ENCODE measurements at regions of chr20 and their contacts with region 1.

Region 1: DNA sequence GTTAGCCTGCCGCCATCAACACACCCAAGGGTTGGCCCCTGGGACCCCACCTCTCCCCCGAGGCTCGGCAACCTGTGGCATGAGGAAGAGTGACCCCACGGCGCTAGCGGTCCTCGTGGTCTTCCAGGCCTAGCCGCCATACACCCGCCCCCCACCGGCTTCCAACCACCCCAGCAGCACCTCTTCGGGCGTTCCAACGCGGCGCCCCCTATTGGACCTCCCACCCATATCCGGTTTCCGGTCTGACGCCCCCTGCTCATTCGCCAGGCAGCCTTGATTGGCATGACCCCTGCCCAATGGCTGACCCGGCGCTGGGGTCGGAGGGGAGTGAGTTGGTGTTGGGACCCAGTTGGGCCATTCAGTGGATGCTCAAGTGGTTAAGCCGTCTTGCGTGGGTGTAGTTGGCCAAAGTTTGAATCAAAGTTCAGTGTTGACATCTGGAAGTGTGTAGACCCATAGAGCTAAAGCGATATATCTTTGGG is at the start of gene GNAS-AS1:
- DNase-seq: peak; percentile 76
- H3K4me3 ChIP-seq: peak within 1 kb of the TSS; percentile 74
- H3K27ac ChIP-seq: no peak within 1 kb of the TSS
- H3K27me3 ChIP-seq: peaks cover 24% of the 10 kb centered on the region
- CTCF ChIP-seq: no peak

Region 2: GRCh38 chr20:58515233-58516184 is 335.2 kb before region 1 on chr20 and contains the start of gene APCDD1L:
- in situ Hi-C with region 1: no loop called
- DNase-seq: no peak
- H3K4me3 ChIP-seq: peak within 1 kb of the TSS; percentile 66
- H3K27ac ChIP-seq: no peak within 1 kb of the TSS
- H3K27me3 ChIP-seq: peaks cover 39% of the 10 kb centered on the region
- CTCF ChIP-seq: no peak

Region 3: DNA sequence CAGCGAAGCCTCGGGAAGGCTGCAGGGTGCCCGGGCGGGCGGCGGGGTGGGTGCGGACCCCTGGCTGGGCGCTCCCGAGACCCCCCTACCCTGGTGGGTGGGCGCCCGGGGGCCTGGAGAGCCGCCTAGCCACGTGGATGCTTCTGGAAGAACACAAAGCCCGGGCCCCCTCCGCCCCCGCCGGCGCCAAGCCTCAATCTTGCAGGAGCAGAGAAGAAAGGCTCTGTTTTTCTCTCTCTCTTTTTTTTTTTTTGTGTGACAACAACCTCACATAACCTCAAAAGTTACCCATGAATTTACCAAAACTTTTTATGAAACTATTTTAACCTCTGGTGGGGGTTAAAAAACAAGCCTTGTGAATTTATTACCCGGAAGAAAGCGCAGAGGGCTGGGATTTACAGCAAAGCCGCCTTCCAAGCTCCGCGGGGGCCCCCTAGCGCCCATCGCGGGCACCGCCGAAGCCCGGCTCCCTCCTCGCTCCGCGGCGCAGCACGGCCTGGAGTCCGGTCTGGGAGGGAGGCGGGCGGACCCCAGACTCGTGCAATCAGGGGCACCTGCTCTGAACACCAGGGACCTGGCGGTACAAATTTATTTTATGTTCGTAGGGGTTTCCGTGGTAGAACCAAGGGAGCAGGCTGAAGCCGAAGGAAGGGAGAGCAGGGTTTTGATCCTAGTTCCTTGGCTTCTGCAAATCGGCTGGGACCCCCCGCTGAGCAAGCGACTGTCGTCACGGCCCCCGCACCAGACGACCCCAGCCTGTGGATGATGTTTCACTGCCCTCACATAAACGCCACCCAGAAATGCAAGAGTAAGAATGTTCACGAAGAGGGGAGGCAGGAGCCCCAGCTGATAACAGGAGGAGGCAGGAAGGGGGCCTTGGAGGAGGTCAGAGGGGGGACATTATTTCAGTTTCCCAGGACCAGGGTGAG is 371.8 kb after region 1 on chr20:
- in situ Hi-C with region 1: loop called (anchors 25 kb)
- DNase-seq: peak; percentile 57
- H3K4me3 ChIP-seq: peak overlapping the region; percentile 49
- H3K27ac ChIP-seq: no peak overlapping the region
- H3K27me3 ChIP-seq: peaks cover 14% of the 10 kb centered on the region
- CTCF ChIP-seq: peak; percentile 82

Measured in brain microvascular endothelial cell (primary cell).